Mammary epithelial cell (primary cell): ENCODE measurements at regions of chr3 and their contacts with region 1.

Region 1: DNA sequence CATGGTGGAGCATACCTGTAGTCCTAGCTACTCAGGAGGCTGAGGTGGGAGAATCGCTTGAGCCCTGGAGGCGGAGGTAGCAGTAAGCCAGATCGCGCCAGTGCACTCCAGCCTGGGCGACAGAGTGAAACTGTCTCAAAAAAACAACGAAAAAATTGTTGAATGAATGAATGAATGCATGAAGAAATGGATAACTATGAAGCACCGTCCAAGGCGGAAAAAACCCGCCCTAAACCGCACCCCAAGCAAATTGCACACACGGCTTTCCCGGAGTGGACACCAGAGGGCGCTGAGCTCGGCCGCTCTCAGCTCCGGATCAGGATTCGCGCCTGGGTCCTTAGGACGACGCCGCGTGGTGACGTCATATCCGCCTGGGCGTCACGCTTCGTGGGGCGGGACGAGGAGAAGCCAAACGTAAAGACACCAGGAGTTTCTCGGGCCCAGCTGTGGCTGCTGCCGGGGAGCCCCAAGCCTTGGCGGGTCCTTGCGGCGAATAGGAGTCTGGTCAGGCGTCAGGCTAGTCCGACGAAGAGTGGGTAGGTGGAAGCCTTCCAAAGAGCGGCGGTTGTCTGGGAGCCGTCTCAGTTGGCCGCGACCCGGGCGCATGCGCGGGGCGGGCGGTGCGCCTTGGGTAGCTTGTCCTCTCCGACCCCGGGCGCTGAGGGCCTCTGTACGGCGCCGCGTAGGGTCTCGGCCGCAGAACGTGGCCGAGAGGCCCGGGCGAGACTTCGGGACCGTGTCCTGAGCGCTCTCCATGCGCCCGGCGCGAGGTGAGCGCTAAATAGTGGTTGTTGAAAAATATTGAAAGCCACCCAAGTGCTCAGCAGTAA is at the starts of genes HTD2 and RPP14:
- DNase-seq: peak; percentile 95
- H3K4me3 ChIP-seq: peak within 1 kb of the TSS; percentile 86 to 89 (median 87)
- H3K27ac ChIP-seq: peak within 1 kb of the TSS; percentile 85
- H3K4me1 ChIP-seq: peaks cover 17% of the 10 kb centered on the region
- H3K27me3 ChIP-seq: no peaks in the 10 kb centered on the region
- CTCF ChIP-seq: peak; percentile 93 to 98
- total RNA-seq, gene HTD2: 10.4 to 18.5 TPM
- total RNA-seq, gene RPP14: 15.5 to 22.1 TPM

Region 2: GRCh38 chr3:58188173-58188564 is 117.9 kb before region 1 on chr3:
- CTCF ChIA-PET with region 1: interaction called, 4 read pairs
- dilution Hi-C with region 1: loop called (anchors 5 kb)
- in situ Hi-C with region 1: loop called (anchors 5 to 10 kb)
- intact Hi-C with region 1: no loop called
- DNase-seq: peak; percentile 82
- H3K4me3 ChIP-seq: no peak overlapping the region
- H3K27ac ChIP-seq: no peak overlapping the region
- H3K4me1 ChIP-seq: peaks cover 9% of the 10 kb centered on the region
- H3K27me3 ChIP-seq: no peaks in the 10 kb centered on the region
- CTCF ChIP-seq: no peak

Region 3: DNA sequence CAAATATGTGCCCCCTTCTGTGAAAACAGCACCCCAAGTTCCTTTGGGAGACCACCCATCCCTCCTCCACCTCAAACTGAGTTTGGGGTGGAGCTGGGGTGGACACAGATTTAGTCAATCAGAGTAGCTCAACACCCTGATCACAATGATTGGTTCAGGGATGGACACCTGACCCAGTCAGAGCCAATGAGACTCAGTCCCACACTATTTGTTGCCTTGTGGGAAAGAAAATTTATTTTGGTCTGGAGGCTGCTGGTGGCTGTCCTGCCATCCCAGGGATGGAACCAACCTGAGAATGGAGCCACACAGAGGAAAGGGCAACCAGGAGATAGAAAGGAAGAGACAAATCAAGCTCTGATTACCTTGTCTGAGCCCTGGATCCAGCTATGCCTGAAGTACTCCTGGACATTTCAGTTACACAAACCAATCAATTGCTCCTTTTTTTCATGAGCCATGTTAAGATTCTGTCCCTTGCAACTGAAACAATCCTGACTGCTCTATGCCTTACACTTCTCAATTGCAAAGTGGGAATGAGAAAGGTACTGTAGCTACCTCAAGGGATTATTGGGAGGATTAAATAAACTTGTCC is 105.9 kb before region 1 on chr3:
- CTCF ChIA-PET with region 1: no interaction called
- dilution Hi-C with region 1: no loop called
- in situ Hi-C with region 1: no loop called
- intact Hi-C with region 1: no loop called
- DNase-seq: no peak
- H3K4me3 ChIP-seq: no peak overlapping the region
- H3K27ac ChIP-seq: no peak overlapping the region
- H3K4me1 ChIP-seq: no peaks in the 10 kb centered on the region
- H3K27me3 ChIP-seq: no peaks in the 10 kb centered on the region
- CTCF ChIP-seq: no peak

Region 4: GRCh38 chr3:58237238-58237940 is 68.7 kb before region 1 on chr3 and contains the start of gene ABHD6:
- CTCF ChIA-PET with region 1: interaction called, 3 read pairs
- dilution Hi-C with region 1: no loop called
- in situ Hi-C with region 1: loop called in 1 of 2 experiments (anchors 10 kb)
- intact Hi-C with region 1: no loop called
- DNase-seq: peak; percentile 73
- H3K4me3 ChIP-seq: peak within 1 kb of the TSS; percentile 82 to 87 (median 86)
- H3K27ac ChIP-seq: peak within 1 kb of the TSS; percentile 45
- H3K4me1 ChIP-seq: peaks cover 25% of the 10 kb centered on the region
- H3K27me3 ChIP-seq: no peaks in the 10 kb centered on the region
- CTCF ChIP-seq: peak in 1 of 2 donors; percentile 43
- total RNA-seq, gene ABHD6: 9.4 to 21.3 TPM

Region 5: GRCh38 chr3:58324391-58325390 is 18.6 kb after region 1 on chr3:
- CTCF ChIA-PET with region 1: no interaction called
- dilution Hi-C with region 1: no loop called
- in situ Hi-C with region 1: no loop called
- intact Hi-C with region 1: no loop called
- DNase-seq: peak; percentile 19
- H3K4me3 ChIP-seq: no peak overlapping the region
- H3K27ac ChIP-seq: no peak overlapping the region
- H3K4me1 ChIP-seq: peaks cover 10% of the 10 kb centered on the region
- H3K27me3 ChIP-seq: no peaks in the 10 kb centered on the region
- CTCF ChIP-seq: no peak

Region 6: DNA sequence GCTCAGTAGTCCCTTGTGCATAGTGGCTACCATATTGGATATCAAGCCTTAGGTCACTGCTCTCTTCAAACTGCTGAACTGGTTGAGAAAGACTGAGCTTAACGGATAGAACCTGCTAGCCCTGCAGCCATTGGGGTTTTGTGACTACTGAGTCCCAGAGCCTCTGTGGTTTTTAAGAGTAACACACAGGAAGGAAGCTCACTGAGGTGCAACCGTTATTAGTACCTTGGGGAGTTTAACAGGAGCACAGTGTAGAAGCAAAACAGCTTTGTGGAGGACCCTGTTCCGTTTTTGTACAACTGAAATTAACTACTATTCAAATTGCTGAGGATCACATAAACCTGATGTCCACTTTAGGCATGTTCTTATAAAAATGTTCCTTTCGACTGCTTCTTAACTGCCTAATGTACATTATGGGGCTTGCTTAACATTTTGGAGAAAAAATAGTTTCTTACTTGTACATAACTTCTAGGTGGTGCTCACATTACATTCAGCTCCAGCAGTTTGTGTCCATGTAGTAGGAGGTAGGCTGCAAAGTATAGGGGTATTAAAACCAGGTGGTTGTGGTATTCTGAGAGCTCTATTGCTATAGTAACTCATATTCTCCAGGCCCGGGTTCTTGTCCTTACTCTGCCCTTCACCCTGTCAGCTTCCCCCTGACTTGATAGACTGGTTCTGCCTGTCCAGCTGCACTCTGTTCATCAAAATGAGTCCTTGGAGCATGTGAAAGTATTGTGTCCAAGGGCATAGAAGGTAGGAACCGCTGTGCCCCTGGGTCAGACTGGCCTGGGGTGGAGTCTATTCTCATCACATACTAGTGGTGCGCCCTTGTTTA is 43.9 kb after region 1 on chr3:
- CTCF ChIA-PET with region 1: no interaction called
- dilution Hi-C with region 1: no loop called
- in situ Hi-C with region 1: no loop called
- intact Hi-C with region 1: no loop called
- DNase-seq: no peak
- H3K4me3 ChIP-seq: no peak overlapping the region
- H3K27ac ChIP-seq: no peak overlapping the region
- H3K4me1 ChIP-seq: no peaks in the 10 kb centered on the region
- H3K27me3 ChIP-seq: no peaks in the 10 kb centered on the region
- CTCF ChIP-seq: no peak

Region 7: GRCh38 chr3:58414538-58415197 is 108.6 kb after region 1 on chr3:
- CTCF ChIA-PET with region 1: no interaction called
- dilution Hi-C with region 1: no loop called
- in situ Hi-C with region 1: no loop called
- intact Hi-C with region 1: loop called (anchors 1 kb)
- DNase-seq: peak; percentile 52
- H3K4me3 ChIP-seq: no peak overlapping the region
- H3K27ac ChIP-seq: no peak overlapping the region
- H3K4me1 ChIP-seq: no peaks in the 10 kb centered on the region
- H3K27me3 ChIP-seq: no peaks in the 10 kb centered on the region
- CTCF ChIP-seq: peak; percentile 75 to 84

Region 8: GRCh38 chr3:58630076-58630709 is 324.1 kb after region 1 on chr3:
- CTCF ChIA-PET with region 1: interaction called, 3 read pairs
- dilution Hi-C with region 1: no loop called
- in situ Hi-C with region 1: no loop called
- intact Hi-C with region 1: loop called (anchors 5 kb)
- DNase-seq: peak; percentile 43
- H3K4me3 ChIP-seq: no peak overlapping the region
- H3K27ac ChIP-seq: no peak overlapping the region
- H3K4me1 ChIP-seq: no peaks in the 10 kb centered on the region
- H3K27me3 ChIP-seq: peaks cover 2% of the 10 kb centered on the region
- CTCF ChIP-seq: peak; percentile 76 to 93

Region 9: GRCh38 chr3:58743296-58743695 is 437.2 kb after region 1 on chr3:
- CTCF ChIA-PET with region 1: no interaction called
- dilution Hi-C with region 1: no loop called
- in situ Hi-C with region 1: no loop called
- intact Hi-C with region 1: no loop called
- DNase-seq: no peak
- H3K4me3 ChIP-seq: no peak overlapping the region
- H3K27ac ChIP-seq: no peak overlapping the region
- H3K4me1 ChIP-seq: no peaks in the 10 kb centered on the region
- H3K27me3 ChIP-seq: no peaks in the 10 kb centered on the region
- CTCF ChIP-seq: no peak